Heart left ventricle (tissue), 16 donors: ENCODE measurements at regions of chr10 and their contacts with region 1.

Region 1: DNA sequence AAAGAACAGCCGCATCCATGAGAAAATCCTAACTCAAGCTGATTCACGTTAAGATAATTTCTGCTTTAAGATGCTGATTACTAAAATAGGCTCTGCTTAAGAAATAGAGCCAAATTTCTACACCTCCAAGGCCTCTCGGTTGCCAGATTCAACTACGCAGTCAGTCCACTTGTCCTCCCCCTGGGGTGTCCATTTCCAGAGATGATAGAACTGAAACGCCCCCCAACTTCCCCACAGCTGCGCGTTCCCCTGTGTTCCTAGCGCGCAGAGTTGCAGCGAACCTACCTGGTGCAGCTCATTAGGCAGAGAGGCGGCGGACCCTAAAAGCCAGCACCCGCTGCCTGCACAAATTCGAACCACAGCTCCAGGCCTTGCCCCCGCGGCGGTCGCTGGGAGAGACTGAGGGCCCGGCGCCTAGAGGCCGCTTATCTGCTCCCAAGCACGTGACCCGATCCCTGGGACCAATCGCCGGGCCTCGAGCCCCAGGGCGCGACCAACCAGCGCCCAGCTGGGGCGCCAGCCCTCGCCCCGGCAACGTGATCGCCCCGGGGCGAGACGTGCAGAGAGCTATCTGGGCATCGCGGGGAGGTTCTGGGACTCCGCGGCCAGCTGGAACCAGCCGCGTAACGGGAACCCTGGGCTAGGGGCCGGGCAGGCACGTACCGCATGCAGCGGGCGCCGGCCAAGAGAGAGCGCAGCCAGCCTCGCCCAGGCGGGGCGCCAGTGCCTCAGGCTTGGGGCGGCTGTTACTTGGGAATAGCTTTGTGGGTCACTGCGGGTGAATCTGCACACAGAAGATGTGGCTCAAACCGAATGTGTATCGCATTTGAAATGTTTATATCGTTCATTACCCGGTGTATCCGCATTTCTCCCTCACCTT is at the start of gene PPP1R3C:
- DNase-seq: peak; percentile 90 to 96 (median 92)
- ATAC-seq: peak; percentile 95 to 98 (median 96)
- H3K4me3 ChIP-seq: peak within 1 kb of the TSS; percentile 52 to 78 (median 66)
- H3K27ac ChIP-seq: peak within 1 kb of the TSS; percentile 30 to 91 (median 86)
- H3K4me1 ChIP-seq: peaks cover 0 to 36% (median 7%) of the 10 kb centered on the region in 12 donors
- H3K27me3 ChIP-seq: peaks cover 0 to 20% (median 0%) of the 10 kb centered on the region in 9 donors
- CTCF ChIP-seq: peak in 9 of 12 donors; percentile 8 to 54 (median 34)
- POLR2A ChIP-seq: peak; percentile 62 to 97
- total RNA-seq, gene PPP1R3C: 38.0 to 270 (median 150) TPM

Region 2: DNA sequence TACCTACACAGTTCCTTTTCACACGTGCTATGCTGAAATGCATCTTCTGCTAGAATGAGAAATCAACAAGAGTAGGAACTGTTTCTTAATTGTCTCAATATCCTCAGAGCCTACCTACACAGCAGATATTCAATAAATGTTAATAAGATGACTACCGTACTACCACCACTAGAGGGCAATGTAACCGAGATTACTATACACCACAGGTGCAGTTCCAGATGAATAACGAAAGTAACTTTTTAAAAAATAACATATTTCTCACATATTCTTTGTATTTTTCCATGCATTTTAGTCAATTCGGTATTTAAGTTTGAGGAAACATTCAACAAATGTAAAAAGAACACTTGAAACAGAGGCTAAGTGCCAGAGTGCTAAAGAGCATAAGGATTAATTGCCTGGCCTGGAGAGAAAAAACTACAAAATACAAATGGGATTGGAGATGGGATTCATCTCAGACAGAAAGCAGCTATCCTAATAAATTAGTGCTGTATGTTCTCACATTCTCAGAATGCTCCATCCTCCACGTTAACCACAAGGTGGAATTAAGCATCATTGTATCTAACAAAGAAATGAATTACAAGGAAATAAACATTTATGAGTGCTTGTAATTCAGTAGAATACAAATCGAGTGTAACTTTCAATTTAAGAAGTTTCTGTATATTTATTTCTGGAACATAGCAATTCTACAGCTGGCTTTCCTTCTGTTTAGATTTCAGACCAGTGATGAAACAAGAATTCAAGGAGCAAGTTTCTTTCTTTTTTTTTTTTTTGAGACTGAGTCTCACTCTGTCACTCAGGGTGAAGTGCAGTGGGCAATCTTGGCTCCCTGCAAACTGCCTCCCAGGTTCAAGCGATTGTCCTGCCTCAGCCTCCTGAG is 243.0 kb before region 1 on chr10:
- intact Hi-C with region 1: loop called in 6 of 10 experiments (anchors 5 to 10 kb)
- DNase-seq: no peak
- ATAC-seq: peak in 3 of 4 donors; percentile 59 to 73 (median 73)
- H3K4me3 ChIP-seq: peak overlapping the region in 2 of 12 donors; percentile 21 to 39
- H3K27ac ChIP-seq: peak overlapping the region in 1 of 12 donors; percentile 32
- H3K4me1 ChIP-seq: peaks cover 0 to 5% (median 0%) of the 10 kb centered on the region in 12 donors
- H3K27me3 ChIP-seq: no peaks in the 10 kb centered on the region
- CTCF ChIP-seq: peak; percentile 64 to 82 (median 74)
- POLR2A ChIP-seq: no peak

Region 3: GRCh38 chr10:91493313-91493712 is 139.6 kb before region 1 on chr10:
- intact Hi-C with region 1: loop called (anchors 1 to 5 kb)
- DNase-seq: no peak
- ATAC-seq: no peak
- H3K4me3 ChIP-seq: no peak overlapping the region
- H3K27ac ChIP-seq: no peak overlapping the region
- H3K4me1 ChIP-seq: peaks cover 0 to 3% (median 0%) of the 10 kb centered on the region in 12 donors
- H3K27me3 ChIP-seq: no peaks in the 10 kb centered on the region
- CTCF ChIP-seq: peak; percentile 26 to 71 (median 58)
- POLR2A ChIP-seq: no peak

Region 4: GRCh38 chr10:91556691-91557566 is 76.0 kb before region 1 on chr10:
- intact Hi-C with region 1: loop called (anchors 1 to 5 kb)
- DNase-seq: no peak
- ATAC-seq: no peak
- H3K4me3 ChIP-seq: no peak overlapping the region
- H3K27ac ChIP-seq: peak overlapping the region in 5 of 12 donors; percentile 9 to 51 (median 35)
- H3K4me1 ChIP-seq: peaks cover 0 to 32% (median 8%) of the 10 kb centered on the region in 12 donors
- H3K27me3 ChIP-seq: no peaks in the 10 kb centered on the region
- CTCF ChIP-seq: no peak
- POLR2A ChIP-seq: no peak

Region 5: DNA sequence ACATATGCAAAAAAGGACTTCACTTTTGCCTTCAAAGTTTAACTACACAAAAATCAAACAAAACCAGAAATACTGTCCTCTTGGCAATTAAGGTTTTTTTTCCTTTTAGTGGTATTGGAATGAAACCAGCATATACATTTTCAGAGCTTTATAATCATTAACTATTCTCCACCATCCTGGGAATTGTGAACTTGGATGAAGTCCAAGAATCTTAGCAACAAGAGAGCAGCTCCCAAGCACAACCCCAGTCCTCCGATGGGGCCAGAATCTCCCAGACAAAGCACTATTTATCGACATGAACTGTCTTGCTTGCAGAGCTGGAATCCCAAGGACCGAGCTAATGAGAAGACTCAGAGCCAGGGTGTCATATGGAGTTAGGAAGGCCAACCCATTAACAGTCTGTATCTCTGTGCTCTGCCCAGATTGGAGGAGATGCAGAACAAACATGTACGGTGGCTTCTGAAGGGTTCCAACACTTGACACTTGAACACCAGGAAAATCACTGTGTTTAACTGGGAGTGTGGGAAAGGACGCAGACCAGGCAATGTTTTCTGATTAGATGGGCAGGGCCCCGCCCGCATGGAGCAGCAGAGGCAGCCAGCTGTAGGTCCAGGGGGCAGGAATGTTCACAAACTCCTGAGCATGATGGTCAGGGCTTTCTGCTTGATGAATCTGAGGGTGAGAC is 35.6 kb before region 1 on chr10:
- intact Hi-C with region 1: loop called in 5 of 10 experiments (anchors 5 kb)
- DNase-seq: no peak
- ATAC-seq: peak; percentile 21 to 64 (median 35)
- H3K4me3 ChIP-seq: no peak overlapping the region
- H3K27ac ChIP-seq: peak overlapping the region in 10 of 12 donors; percentile 2 to 75 (median 47)
- H3K4me1 ChIP-seq: peaks cover 0 to 54% (median 28%) of the 10 kb centered on the region in 12 donors
- H3K27me3 ChIP-seq: no peaks in the 10 kb centered on the region
- CTCF ChIP-seq: no peak
- POLR2A ChIP-seq: no peak

Region 6: GRCh38 chr10:91745074-91745832 is 112.3 kb after region 1 on chr10:
- intact Hi-C with region 1: loop called in 1 of 10 experiments (anchors 5 kb)
- DNase-seq: peak in 2 of 5 donors; percentile 28
- ATAC-seq: peak in 3 of 4 donors; percentile 56 to 80 (median 65)
- H3K4me3 ChIP-seq: no peak overlapping the region
- H3K27ac ChIP-seq: no peak overlapping the region
- H3K4me1 ChIP-seq: peaks cover 0 to 5% (median 0%) of the 10 kb centered on the region in 12 donors
- H3K27me3 ChIP-seq: peaks cover 0 to 14% (median 0%) of the 10 kb centered on the region in 9 donors
- CTCF ChIP-seq: peak in 5 of 12 donors; percentile 16 to 42 (median 26)
- POLR2A ChIP-seq: no peak